ENCODE measurements at regions of chr6 and their contacts with region 1.

Region 1: DNA sequence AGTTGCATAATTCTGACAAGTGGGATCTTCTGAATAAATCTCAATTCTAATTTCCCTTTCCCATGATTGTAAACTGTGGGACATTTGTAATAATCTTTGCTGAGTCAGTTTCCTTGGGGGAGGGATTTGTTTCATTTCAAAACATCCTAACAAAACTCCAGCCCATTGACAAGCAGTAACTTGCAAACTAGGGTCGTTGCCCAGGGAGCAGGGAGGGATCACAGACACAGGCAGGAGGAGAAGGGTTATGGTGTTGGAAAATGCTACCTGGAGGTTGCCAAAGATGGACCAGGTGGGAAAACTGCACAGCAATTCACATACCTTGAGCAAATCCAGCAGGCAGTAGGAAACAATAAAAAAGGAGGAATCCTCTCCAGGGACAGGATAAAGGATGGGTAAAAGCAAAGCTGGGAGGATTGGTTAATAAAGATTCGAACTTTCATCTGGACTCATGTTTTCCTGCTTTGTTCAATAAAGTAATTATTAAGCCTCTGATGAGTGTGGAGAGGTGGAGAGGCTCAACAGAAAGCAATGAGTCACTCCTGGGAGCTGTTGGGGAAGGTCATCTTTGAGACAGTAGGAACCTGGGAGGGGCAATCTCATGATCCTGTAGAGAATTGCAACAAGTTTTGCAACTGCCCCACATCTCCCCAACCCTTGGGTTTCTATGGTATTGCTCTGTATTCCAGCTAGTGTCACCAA is 87.3 kb upstream of the AKIRIN2 start:
- DNase-seq: no peak
- ATAC-seq: peak; percentile 27 to 88

Region 2: GRCh38 chr6:87049779-87050178 is 739.6 kb before region 1 on chr6:
- intact Hi-C with region 1: no loop called
- DNase-seq: no peak
- ATAC-seq: no peak

Region 3: DNA sequence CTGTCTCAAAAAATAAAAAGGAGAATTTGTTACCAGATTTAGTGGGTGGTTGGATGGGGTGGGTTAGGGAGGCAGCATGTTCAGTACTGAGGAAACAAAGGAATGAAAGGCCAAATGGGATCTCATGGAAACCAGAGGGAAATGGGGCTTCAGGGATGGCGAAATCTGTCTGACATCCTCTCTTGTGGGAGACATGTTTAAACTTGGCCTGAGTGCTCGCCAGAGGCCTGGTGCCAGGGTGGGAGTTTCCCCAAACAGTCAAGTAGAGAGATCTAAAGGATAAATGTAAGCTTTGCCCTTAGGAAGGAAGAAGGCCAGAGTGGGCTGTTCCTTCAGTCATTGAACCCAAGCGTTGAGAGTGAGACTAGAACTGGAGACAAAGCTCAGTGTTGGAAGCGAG is 25.4 kb before region 1 on chr6:
- intact Hi-C with region 1: loop called in 1 of 2 experiments (anchors 1 kb)
- DNase-seq: no peak
- ATAC-seq: no peak